ENCODE measurements at regions of chr1 and their contacts with region 1.

Region 1: DNA sequence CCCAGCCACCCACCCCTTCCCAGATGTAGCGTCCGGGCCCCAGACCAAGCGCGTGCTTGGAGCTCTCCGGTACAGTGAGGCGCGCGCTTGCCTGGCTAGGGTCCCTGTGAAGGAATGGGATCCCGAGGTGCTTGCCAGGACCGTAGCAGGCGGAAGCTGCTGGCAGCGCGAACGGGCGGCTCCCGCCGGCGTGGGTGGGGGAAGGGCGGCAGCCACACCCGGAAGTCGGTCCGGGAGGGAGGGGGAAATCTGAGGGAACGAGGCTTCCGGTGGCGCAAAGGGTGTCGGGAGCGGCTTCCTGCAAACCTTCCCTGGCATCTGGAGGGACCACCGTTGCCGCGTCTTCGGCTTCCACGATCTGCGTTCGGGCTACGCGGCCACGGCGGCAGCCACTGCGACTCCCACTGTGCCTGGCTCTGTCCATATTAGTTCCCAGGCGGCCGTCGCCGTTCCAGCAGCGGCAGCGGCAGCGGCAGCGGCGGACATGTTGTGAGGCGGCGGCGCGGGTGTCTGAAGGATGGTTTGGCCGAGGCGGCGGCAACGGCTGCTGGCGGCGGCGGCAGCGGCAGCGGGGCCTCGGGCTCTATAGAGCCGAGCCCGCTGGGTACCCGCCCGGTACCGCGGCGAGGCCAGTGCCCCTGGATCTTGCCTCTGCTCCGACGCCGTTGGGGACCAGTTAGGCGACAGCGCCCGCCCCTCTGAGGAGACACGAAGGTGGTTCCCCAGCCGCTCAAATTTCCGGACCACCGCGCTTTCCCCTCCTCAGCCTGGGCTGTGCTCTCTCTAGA is at the start of gene DR1:
- DNase-seq: peak; percentile 98
- H3K4me3 Mint-ChIP-seq: peak within 1 kb of the TSS; percentile 99
- H3K27ac Mint-ChIP-seq: peak within 1 kb of the TSS; percentile 99
- H3K4me1 Mint-ChIP-seq: peaks cover 21% of the 10 kb centered on the region
- H3K27me3 Mint-ChIP-seq: no peaks in the 10 kb centered on the region
- total RNA-seq, gene DR1: 100 and 107 TPM in 2 replicates

Region 2: GRCh38 chr1:92975551-92976232 is 370.1 kb before region 1 on chr1:
- intact Hi-C with region 1: no loop called
- DNase-seq: peak; percentile 59
- H3K4me3 Mint-ChIP-seq: peak overlapping the region; percentile 6
- H3K27ac Mint-ChIP-seq: peak overlapping the region; percentile 79
- H3K4me1 Mint-ChIP-seq: peaks cover 60% of the 10 kb centered on the region
- H3K27me3 Mint-ChIP-seq: no peaks in the 10 kb centered on the region

Region 3: GRCh38 chr1:93042187-93043056 is 303.4 kb before region 1 on chr1:
- intact Hi-C with region 1: loop called (anchors 10 kb)
- DNase-seq: peak; percentile 88
- H3K4me3 Mint-ChIP-seq: peak overlapping the region; percentile 83
- H3K27ac Mint-ChIP-seq: peak overlapping the region; percentile 88
- H3K4me1 Mint-ChIP-seq: peaks cover 27% of the 10 kb centered on the region
- H3K27me3 Mint-ChIP-seq: no peaks in the 10 kb centered on the region

Region 4: GRCh38 chr1:93179886-93180722 is 165.7 kb before region 1 on chr1 and contains the start of gene TMED5:
- intact Hi-C with region 1: loop called (anchors 2 kb)
- DNase-seq: peak; percentile 99
- H3K4me3 Mint-ChIP-seq: peak within 1 kb of the TSS; percentile 95
- H3K27ac Mint-ChIP-seq: peak within 1 kb of the TSS; percentile 100
- H3K4me1 Mint-ChIP-seq: peaks cover 42% of the 10 kb centered on the region
- H3K27me3 Mint-ChIP-seq: no peaks in the 10 kb centered on the region
- total RNA-seq, gene TMED5: 43.1 and 44.7 TPM in 2 replicates

Region 5: GRCh38 chr1:93615582-93616150 is 269.8 kb after region 1 on chr1:
- intact Hi-C with region 1: loop called (anchors 5 kb)
- DNase-seq: no peak
- H3K4me3 Mint-ChIP-seq: peak overlapping the region; percentile 30
- H3K27ac Mint-ChIP-seq: peak overlapping the region; percentile 84
- H3K4me1 Mint-ChIP-seq: peaks cover 17% of the 10 kb centered on the region
- H3K27me3 Mint-ChIP-seq: peaks cover 42% of the 10 kb centered on the region

Region 6: GRCh38 chr1:93878889-93879586 is 533.2 kb after region 1 on chr1 and contains the start of gene DNTTIP2:
- intact Hi-C with region 1: loop called (anchors 10 kb)
- DNase-seq: peak; percentile 97
- H3K4me3 Mint-ChIP-seq: peak within 1 kb of the TSS; percentile 93
- H3K27ac Mint-ChIP-seq: peak within 1 kb of the TSS; percentile 97
- H3K4me1 Mint-ChIP-seq: peaks cover 33% of the 10 kb centered on the region
- H3K27me3 Mint-ChIP-seq: no peaks in the 10 kb centered on the region
- total RNA-seq, gene DNTTIP2: 85.4 and 89.9 TPM in 2 replicates